Mammary epithelial cell (primary cell): ENCODE measurements at regions of chr12 and their contacts with region 1.

Region 1: DNA sequence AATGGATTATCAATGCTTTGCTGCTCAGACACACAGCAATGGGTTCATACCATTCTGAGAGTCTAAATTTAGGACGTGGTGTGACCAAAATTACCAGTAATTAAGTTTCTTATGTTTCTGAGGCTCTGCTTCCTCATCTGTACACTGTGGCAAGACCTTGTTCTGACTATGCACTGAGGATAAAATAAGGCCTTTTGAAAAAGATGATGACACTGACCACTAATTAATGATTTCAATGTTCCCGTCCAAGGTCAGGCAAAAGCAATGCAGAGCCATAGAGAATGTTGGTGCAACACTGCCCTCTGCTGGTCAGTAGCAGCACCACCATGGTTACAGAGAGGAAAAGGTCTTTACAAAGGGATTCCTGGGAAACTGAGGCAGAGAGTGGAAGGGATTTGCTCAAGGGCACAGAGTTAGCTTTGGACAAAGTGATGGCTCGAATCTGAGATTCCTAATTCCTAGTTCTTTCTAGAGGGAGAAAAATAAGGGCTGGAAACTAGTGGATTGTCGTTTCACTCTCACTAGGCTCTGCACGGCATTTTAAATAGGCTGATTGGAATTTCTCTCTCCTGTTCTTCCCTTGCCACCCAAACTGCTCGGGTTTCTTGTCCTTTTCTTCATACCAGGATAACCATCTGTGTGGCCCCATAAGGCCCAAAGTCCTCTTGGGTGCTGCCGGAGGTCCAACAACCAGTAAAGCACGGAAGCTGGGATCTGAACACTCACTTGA is 22.3 kb upstream of the P2RX7 start:
- DNase-seq: peak; percentile 38
- H3K4me3 ChIP-seq: no peak overlapping the region
- H3K27ac ChIP-seq: no peak overlapping the region
- H3K4me1 ChIP-seq: no peaks in the 10 kb centered on the region
- H3K27me3 ChIP-seq: no peaks in the 10 kb centered on the region
- CTCF ChIP-seq: peak; percentile 92 to 98

Region 2: DNA sequence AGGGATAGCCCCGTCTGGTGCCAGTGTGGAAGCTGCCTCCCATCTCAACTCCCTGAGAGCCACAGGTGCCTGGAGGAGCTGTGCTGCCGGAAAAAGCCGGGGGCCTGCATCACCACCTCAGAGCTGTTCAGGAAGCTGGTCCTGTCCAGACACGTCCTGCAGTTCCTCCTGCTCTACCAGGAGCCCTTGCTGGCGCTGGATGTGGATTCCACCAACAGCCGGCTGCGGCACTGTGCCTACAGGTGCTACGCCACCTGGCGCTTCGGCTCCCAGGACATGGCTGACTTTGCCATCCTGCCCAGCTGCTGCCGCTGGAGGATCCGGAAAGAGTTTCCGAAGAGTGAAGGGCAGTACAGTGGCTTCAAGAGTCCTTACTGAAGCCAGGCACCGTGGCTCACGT is 74.0 kb after region 1 on chr12:
- CTCF ChIA-PET with region 1: no interaction called
- dilution Hi-C with region 1: no loop called
- in situ Hi-C with region 1: no loop called
- intact Hi-C with region 1: loop called (anchors 2 kb)
- DNase-seq: peak; percentile 91
- H3K4me3 ChIP-seq: no peak overlapping the region
- H3K27ac ChIP-seq: no peak overlapping the region
- H3K4me1 ChIP-seq: peaks cover 8% of the 10 kb centered on the region
- H3K27me3 ChIP-seq: no peaks in the 10 kb centered on the region
- CTCF ChIP-seq: peak; percentile 23 to 71

Region 3: DNA sequence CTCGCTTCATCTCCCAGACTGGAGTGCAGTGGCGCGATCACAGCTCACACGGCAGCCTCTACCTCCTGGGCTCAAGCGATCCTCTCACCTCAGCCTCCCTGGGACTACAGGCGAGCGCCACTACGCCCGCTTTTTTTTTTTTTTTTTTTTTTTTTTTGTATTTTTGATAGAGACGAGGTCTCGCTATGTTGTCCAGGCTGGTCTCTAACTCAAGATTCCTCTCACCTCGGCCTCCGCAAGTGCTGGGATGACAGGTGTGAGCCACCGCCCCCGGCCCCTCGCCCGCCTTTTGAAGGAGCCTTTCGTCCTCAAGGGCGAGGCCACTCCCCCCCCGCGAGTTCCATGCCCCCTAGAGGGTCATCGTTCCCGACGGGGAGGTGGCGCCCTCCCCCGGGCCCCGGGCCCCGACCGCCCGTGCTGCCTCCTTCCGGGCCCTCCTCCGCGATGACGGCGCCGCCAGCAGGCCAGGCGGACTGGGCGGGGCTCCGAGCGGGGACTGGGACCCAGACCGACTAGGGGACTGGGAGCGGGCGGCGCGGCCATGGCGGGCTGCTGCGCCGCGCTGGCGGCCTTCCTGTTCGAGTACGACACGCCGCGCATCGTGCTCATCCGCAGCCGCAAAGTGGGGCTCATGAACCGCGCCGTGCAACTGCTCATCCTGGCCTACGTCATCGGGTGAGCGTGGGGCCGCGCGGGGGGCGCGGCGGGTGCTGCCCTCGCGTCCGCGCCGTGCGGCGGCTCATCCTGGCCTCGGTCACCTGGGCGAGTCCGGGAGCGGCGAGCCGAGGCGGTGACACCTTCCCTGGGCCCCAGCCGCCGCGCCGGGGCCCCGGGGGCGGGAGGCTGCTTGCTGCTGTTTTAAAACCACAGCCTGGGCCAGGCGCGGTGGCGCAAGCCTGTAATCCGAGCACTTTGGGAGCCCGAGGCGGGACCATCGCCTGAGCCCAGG is 99.5 kb after region 1 on chr12 and contains the start of gene P2RX4:
- CTCF ChIA-PET with region 1: no interaction called
- dilution Hi-C with region 1: loop called (anchors 5 kb)
- in situ Hi-C with region 1: no loop called
- intact Hi-C with region 1: loop called (anchors 5 kb)
- DNase-seq: peak; percentile 68
- H3K4me3 ChIP-seq: peak within 1 kb of the TSS; percentile 49 to 72 (median 58)
- H3K27ac ChIP-seq: peak within 1 kb of the TSS; percentile 47
- H3K4me1 ChIP-seq: peaks cover 13% of the 10 kb centered on the region
- H3K27me3 ChIP-seq: no peaks in the 10 kb centered on the region
- CTCF ChIP-seq: no peak
- total RNA-seq, gene P2RX4: 5.0 to 5.4 TPM

Region 4: GRCh38 chr12:121214855-121215745 is 104.7 kb after region 1 on chr12:
- CTCF ChIA-PET with region 1: no interaction called
- dilution Hi-C with region 1: loop called (anchors 5 kb)
- in situ Hi-C with region 1: no loop called
- intact Hi-C with region 1: loop called (anchors 5 kb)
- DNase-seq: peak; percentile 77
- H3K4me3 ChIP-seq: no peak overlapping the region
- H3K27ac ChIP-seq: no peak overlapping the region
- H3K4me1 ChIP-seq: peaks cover 18% of the 10 kb centered on the region
- H3K27me3 ChIP-seq: no peaks in the 10 kb centered on the region
- CTCF ChIP-seq: no peak

Region 5: GRCh38 chr12:121230538-121230907 is 120.1 kb after region 1 on chr12:
- CTCF ChIA-PET with region 1: no interaction called
- dilution Hi-C with region 1: no loop called
- in situ Hi-C with region 1: no loop called
- intact Hi-C with region 1: loop called (anchors 1 kb)
- DNase-seq: no peak
- H3K4me3 ChIP-seq: no peak overlapping the region
- H3K27ac ChIP-seq: no peak overlapping the region
- H3K4me1 ChIP-seq: no peaks in the 10 kb centered on the region
- H3K27me3 ChIP-seq: no peaks in the 10 kb centered on the region
- CTCF ChIP-seq: no peak

Region 6: DNA sequence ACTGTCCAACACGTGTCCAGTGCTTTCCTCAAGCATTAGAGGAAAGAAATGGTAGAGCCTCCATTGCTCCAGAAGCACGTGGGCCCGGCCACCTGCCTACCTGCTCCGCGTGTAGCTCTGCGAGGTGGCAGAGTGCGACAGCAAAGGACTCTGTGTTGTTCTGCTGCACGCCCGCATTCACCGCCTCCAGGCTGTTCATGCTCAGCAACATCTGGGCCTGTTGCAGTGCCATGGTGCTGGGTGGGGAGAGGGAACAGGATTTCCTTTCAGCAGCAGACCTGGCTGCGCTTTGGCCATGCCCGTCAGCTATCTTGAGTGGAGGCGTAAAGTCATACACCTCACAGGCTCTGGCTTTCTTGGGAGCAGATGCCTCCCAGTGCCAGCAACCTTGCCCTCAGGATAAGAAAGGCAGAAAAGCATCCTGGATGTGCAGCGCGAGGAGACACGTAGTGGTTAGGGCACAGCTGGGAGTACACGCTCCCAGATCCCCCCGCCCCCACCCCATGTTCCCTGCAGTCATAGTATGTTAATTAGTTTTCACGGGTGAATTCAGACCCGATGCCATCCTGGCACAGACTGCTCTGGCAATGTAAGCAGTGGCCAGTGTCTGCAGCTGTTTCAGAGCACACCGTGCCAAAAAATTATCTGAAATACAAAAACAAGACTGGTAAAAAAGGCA is 216.8 kb after region 1 on chr12:
- CTCF ChIA-PET with region 1: no interaction called
- dilution Hi-C with region 1: no loop called
- in situ Hi-C with region 1: no loop called
- intact Hi-C with region 1: no loop called
- DNase-seq: no peak
- H3K4me3 ChIP-seq: no peak overlapping the region
- H3K27ac ChIP-seq: no peak overlapping the region
- H3K4me1 ChIP-seq: no peaks in the 10 kb centered on the region
- H3K27me3 ChIP-seq: no peaks in the 10 kb centered on the region
- CTCF ChIP-seq: no peak